CD4-positive, alpha-beta T cell (primary cell): ENCODE measurements at regions of chr12 and their contacts with region 1.

Region 1: DNA sequence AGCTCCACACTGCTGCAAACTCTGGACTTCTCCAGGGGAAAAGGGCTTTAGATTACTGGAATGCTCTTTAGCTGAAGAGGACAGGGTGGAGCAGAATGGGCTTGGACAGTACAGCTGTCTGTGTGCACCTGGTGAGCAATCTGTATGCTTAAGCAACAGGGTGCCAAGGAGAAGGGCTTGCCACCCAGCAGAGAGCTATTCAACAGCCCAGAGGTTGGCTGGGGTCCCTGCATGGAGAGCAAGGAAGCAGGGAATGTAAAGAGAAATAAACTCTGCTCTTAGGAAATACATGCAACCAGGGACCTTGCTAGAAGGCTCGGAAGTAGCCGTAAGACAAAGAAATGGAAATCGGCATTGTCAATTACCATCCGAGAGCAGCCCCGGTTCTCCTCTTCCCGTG is 53.0 kb upstream of the CORO1C start:
- DNase-seq: no peak
- ATAC-seq: no peak
- H3K4me3 ChIP-seq: no peak overlapping the region
- H3K4me3 Mint-ChIP-seq: no peak overlapping the region
- H3K27ac ChIP-seq: no peak overlapping the region
- H3K27ac Mint-ChIP-seq: no peak overlapping the region
- H3K4me1 ChIP-seq: no peaks in the 10 kb centered on the region
- H3K4me1 Mint-ChIP-seq: no peaks in the 10 kb centered on the region
- H3K27me3 ChIP-seq: no peaks in the 10 kb centered on the region
- H3K27me3 Mint-ChIP-seq: no peaks in the 10 kb centered on the region
- CTCF ChIP-seq: no peak

Region 2: DNA sequence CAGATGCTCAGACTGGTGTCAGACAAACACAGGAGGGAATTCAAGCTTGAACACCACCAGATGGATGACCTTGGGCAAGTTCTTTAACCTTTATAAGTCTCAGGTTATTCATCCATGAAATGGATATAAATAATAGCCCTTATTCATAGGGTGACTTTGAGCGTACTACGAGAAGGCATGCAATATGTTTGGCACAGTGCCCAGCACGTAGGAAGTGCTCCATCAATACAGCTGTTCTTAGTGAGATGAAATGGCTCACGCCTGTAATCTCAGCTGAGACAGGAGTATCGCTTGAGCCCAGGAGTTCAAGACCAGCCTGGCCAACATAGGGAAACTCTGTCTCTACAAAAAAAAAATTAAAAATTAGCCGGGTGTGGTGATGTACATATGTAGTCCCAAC is 354.0 kb before region 1 on chr12:
- CTCF ChIA-PET with region 1: no interaction called
- POLR2A ChIA-PET with region 1: no interaction called
- intact Hi-C with region 1: no loop called
- DNase-seq: no peak
- ATAC-seq: no peak
- H3K4me3 ChIP-seq: no peak overlapping the region
- H3K4me3 Mint-ChIP-seq: no peak overlapping the region
- H3K27ac ChIP-seq: no peak overlapping the region
- H3K27ac Mint-ChIP-seq: no peak overlapping the region
- H3K4me1 ChIP-seq: no peaks in the 10 kb centered on the region
- H3K4me1 Mint-ChIP-seq: no peaks in the 10 kb centered on the region
- H3K27me3 ChIP-seq: no peaks in the 10 kb centered on the region
- H3K27me3 Mint-ChIP-seq: peaks cover 30% of the 10 kb centered on the region
- CTCF ChIP-seq: no peak

Region 3: GRCh38 chr12:108744021-108744897 is 40.0 kb before region 1 on chr12:
- CTCF ChIA-PET with region 1: no interaction called
- POLR2A ChIA-PET with region 1: no interaction called
- intact Hi-C with region 1: loop called in 1 of 2 experiments (anchors 5 kb)
- DNase-seq: no peak
- ATAC-seq: no peak
- H3K4me3 ChIP-seq: no peak overlapping the region
- H3K4me3 Mint-ChIP-seq: no peak overlapping the region
- H3K27ac ChIP-seq: no peak overlapping the region
- H3K27ac Mint-ChIP-seq: no peak overlapping the region
- H3K4me1 ChIP-seq: no peaks in the 10 kb centered on the region
- H3K4me1 Mint-ChIP-seq: no peaks in the 10 kb centered on the region
- H3K27me3 ChIP-seq: no peaks in the 10 kb centered on the region
- H3K27me3 Mint-ChIP-seq: no peaks in the 10 kb centered on the region
- CTCF ChIP-seq: no peak